Cardiac septum (tissue), 1 donor: ENCODE measurements at regions of chr13 and their contacts with region 1.

Region 1: DNA sequence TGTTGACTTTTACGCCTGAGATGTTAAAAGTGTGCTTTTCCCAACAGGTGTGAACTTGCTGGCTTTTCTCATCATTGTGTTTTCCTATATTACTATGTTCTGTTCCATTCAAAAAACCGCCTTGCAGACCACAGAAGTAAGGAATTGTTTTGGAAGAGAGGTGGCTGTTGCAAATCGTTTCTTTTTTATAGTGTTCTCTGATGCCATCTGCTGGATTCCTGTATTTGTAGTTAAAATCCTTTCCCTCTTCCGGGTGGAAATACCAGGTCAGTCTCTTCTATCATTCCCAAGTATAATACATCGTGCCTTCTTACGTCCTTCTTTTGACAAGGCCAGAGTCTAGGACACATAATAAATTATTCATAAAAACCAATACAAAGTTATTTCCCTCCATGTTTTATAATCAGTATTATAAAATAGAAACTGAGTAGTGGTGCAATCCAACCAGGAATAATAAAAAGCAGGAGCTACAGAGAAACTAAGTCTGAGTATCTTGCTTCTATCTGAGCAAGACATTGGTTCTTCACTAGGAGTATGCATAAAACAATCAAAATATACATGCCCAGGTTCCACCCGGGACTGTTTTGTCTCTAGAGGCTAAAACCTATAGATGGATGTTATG is 57.9 kb downstream of the RXFP2 start:
- DNase-seq: no peak

Region 2: DNA sequence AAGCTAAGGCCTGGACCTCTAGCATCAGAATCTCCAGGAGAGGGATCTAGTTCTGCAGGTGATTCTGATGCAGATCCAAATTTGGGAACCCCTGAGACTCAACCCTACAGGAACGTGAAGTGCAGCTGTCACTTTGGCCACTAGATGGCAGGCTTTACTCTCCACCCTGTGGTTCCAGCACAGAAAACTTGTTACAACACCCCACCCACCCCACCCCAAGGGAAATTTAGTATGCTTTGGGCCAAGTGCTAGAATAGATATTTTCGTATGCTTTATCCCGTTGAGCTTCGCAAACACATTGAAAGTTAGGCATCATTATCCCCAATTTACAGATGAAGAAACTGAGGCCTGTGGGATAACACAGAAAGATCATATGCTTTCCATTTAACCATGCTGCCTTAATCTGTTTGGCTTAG is 365.5 kb before region 1 on chr13:
- intact Hi-C with region 1: loop called (anchors 5 kb)
- DNase-seq: no peak

Region 3: GRCh38 chr13:31611214-31611613 is 186.1 kb before region 1 on chr13:
- intact Hi-C with region 1: no loop called
- DNase-seq: no peak

Region 4: DNA sequence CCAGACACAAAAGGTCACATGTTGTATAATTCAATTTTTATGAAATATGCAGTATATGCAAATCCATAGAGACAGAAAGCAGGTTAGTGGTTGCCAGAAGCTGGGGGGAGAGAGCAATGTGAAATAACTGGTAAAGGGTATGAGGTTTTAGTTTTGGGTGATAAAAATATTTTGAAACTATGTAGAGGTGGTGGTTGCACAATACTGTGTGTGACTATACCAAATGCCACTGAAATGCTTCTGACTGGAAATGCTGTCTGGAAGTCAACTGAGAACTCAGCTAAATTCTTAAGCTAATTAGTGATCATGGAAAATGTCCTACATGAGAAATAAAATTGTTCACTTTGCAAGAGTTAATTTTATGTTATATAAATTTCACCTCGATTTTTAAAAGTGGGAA is 123.2 kb before region 1 on chr13:
- intact Hi-C with region 1: no loop called
- DNase-seq: no peak